Activated CD4-positive, alpha-beta memory T cell treated with anti-CD3 and anti-CD28 coated beads for 36 hours (primary cell): ENCODE measurements at regions of chr11 and their contacts with region 1.

Region 1: DNA sequence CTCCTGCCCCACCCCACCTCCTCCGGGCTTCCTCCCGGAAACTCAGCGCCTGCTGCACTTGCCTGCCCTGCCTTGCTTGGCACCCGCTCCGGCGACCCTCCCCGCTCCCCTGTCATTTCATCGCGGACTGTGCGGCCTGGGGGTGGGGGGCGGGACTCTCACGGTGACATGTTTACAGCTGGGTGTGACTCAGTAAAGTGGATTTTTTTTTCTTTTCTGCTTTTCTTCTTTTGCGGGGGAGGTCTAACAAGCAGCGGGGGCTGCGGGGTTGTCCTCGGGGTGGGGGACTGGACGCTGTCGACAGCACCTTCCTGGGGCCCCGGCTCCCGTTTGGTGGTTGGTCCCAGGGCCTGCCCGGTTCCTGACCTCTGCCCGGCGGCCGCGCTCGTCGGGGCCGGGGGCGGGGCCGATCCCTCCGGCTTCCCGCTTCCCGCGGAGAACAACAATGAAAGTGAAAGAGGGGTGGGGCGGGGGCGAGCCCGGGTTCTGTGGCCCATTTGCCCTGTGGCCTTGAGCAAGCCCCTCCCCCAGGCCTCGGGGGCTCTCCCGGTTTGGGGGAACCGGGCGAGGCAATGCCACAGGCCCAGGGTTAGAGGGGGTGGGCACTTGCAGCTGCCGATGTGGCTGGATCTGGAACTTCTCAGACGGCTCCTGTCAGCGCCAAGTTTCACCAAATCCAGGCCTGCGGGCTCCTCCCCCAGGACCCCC is 975 bp upstream of the MDK start:
- DNase-seq: peak; percentile 88
- H3K4me3 Mint-ChIP-seq: peak overlapping the region; percentile 74
- H3K27ac Mint-ChIP-seq: peak overlapping the region; percentile 45
- H3K4me1 Mint-ChIP-seq: peaks cover 7% of the 10 kb centered on the region
- H3K27me3 Mint-ChIP-seq: peaks cover 17% of the 10 kb centered on the region

Region 2: DNA sequence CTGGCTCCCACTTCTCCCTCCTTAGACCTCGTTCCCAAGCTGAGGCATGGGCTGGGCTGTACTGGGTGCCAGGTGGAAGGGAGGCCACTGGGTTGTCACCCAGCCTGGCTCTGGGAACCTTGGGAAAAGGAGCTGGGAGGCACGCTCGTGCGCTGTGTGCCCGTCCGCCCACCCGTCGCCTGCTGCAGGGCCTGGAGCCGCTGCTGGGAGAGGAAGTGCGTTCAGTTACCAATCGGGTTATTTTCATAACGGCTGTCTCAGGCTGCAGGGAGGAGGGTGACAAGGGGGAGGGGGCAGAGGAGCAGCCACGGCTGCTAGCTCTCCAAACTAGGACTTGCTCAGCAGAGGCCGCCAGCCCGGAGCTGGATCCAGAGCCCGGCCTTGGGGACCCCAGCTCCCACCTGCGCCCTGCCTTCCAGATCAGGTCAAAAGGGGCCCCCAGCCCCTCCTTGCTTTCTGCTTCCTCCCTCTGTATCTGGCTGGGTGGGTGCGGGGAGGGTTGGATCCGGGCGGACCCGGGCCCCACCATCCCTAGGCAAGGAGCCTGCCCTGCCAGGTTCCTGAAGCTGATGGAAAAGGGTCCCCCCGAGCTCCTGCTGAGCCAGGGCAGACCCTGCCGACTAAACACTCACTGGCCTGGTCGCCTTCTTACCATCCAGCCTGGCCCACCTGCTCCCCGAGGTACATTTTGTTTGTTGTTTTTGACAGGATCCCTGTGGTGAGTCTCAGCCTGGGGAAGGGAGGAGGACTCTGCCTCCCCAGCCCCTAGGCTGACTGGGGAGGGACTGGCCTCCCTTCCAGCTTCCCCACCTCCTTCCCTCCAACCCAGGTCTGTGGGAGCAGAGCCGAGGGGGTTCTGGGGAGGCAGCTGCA is 19.0 kb before region 1 on chr11:
- CTCF ChIA-PET with region 1: interaction called, 3 read pairs
- POLR2A ChIA-PET with region 1: no interaction called
- intact Hi-C with region 1: loop called (anchors 2 kb)
- DNase-seq: peak; percentile 84
- H3K4me3 Mint-ChIP-seq: peak overlapping the region; percentile 72
- H3K27ac Mint-ChIP-seq: peak overlapping the region; percentile 84
- H3K4me1 Mint-ChIP-seq: peaks cover 62% of the 10 kb centered on the region
- H3K27me3 Mint-ChIP-seq: no peaks in the 10 kb centered on the region

Region 3: DNA sequence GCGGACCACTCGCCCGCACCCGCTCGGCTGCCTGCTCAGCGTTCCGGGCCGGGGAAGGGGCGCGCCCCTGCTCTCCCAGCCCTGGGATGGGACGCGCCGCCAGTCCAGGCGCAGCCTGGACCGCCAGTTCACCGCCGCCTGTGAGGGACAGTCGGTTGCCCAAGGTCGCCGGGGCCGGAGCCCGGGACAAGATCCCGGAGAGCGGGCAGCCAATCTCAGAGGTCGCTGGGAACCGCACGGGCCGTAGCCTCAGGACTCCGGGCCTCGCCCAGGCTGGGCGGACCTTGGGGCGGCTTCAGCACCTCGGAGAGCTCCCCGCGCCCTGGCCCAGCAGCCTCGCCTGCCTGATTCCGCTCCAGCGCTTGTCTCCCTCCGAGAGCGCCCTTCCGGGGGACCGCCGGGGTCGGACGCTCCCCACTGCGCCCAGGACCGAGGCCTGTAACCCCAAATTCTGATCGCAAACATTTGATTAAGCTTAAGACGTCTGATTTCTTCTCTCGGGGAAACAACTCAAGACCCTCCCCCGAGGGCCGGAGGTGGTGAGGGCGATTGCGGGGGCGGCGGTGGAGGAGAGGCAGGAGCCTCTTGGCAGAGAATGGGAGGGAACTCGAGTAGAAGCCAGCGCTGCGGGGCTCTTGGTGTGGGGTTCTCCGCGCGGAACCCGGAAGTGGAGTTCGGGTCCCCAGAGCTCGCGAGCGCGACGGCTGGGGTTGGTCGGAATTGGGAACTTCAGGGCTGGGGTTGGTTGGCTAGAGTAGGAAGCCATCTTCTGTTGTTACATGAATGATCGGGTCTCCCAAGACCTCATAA is 12.1 kb after region 1 on chr11:
- CTCF ChIA-PET with region 1: interaction called, 12 read pairs
- POLR2A ChIA-PET with region 1: interaction called, 3 read pairs
- intact Hi-C with region 1: no loop called
- DNase-seq: peak; percentile 87
- H3K4me3 Mint-ChIP-seq: peak overlapping the region; percentile 71
- H3K27ac Mint-ChIP-seq: no peak overlapping the region
- H3K4me1 Mint-ChIP-seq: peaks cover 27% of the 10 kb centered on the region
- H3K27me3 Mint-ChIP-seq: peaks cover 37% of the 10 kb centered on the region

Region 4: GRCh38 chr11:46404476-46405017 is 24.1 kb after region 1 on chr11:
- CTCF ChIA-PET with region 1: no interaction called
- POLR2A ChIA-PET with region 1: no interaction called
- intact Hi-C with region 1: no loop called
- DNase-seq: no peak
- H3K4me3 Mint-ChIP-seq: no peak overlapping the region
- H3K27ac Mint-ChIP-seq: no peak overlapping the region
- H3K4me1 Mint-ChIP-seq: no peaks in the 10 kb centered on the region
- H3K27me3 Mint-ChIP-seq: no peaks in the 10 kb centered on the region